Naive thymus-derived CD4-positive, alpha-beta T cell (primary cell): ENCODE measurements at regions of chr6 and their contacts with region 1.

Region 1: DNA sequence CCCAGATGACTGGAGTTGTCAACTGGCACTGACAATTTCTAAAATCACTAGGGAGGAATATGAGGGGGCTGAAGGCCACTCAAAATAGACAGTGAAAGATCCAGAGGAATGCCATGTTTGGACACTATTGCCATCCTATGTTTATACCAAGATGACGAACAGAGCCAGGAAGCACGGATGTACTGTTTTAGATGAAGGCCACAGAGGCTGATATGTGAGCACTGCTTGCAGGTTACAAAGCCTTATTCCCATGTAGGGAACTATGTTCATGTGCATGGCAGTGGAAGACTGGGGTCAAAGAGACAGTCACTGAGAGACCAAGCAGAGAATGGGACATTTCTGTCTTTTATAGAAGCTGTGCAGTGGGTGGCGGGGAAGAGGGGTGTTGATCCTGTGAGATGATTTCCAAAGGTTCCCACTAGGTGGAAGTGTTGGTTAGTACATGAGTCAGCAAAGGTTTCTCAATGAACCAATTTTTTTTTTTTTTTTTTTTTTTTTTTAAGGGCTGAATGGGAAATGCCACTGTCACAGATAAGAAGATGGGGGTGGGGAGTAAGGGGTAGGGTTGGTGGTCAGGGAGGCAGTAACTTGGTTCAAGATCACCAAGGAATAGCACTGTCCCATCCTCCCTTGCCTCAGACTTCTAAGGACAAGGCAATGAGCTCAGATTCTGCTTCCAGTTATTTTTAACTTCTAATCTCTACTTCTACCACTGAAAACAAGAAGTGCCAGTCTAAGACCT is 46.7 kb upstream of the MOCS1 start:
- DNase-seq: peak in 3 of 9 donors; percentile 2 to 23 (median 5)
- ATAC-seq: no peak
- H3K4me3 ChIP-seq: no peak overlapping the region
- H3K4me3 Mint-ChIP-seq: no peak overlapping the region
- H3K27ac ChIP-seq: no peak overlapping the region
- H3K27ac Mint-ChIP-seq: no peak overlapping the region
- H3K4me1 ChIP-seq: no peaks in the 10 kb centered on the region
- H3K4me1 Mint-ChIP-seq: no peaks in the 10 kb centered on the region
- H3K27me3 ChIP-seq: no peaks in the 10 kb centered on the region
- H3K27me3 Mint-ChIP-seq: peaks cover 14 to 32% (median 25%) of the 10 kb centered on the region in 5 donors

Region 2: GRCh38 chr6:40308533-40309306 is 327.7 kb after region 1 on chr6:
- CTCF ChIA-PET with region 1: no interaction called
- POLR2A ChIA-PET with region 1: no interaction called
- intact Hi-C with region 1: loop called (anchors 5 to 10 kb)
- DNase-seq: peak in 6 of 9 donors; percentile 14 to 70 (median 40)
- ATAC-seq: peak; percentile 58
- H3K4me3 ChIP-seq: no peak overlapping the region
- H3K4me3 Mint-ChIP-seq: no peak overlapping the region
- H3K27ac ChIP-seq: no peak overlapping the region
- H3K27ac Mint-ChIP-seq: peak overlapping the region in 1 of 9 donors; percentile 58
- H3K4me1 ChIP-seq: no peaks in the 10 kb centered on the region
- H3K4me1 Mint-ChIP-seq: peaks cover 0 to 12% (median 0%) of the 10 kb centered on the region in 7 donors
- H3K27me3 ChIP-seq: no peaks in the 10 kb centered on the region
- H3K27me3 Mint-ChIP-seq: peaks cover 34 to 48% (median 44%) of the 10 kb centered on the region in 5 donors

Region 3: GRCh38 chr6:40587240-40588069 is 606.4 kb after region 1 on chr6 and contains the start of gene LRFN2:
- CTCF ChIA-PET with region 1: no interaction called
- POLR2A ChIA-PET with region 1: no interaction called
- intact Hi-C with region 1: loop called in 1 of 2 experiments (anchors 5 kb)
- DNase-seq: peak; percentile 28 to 83 (median 64)
- ATAC-seq: peak; percentile 89
- H3K4me3 ChIP-seq: peak within 1 kb of the TSS; percentile 61
- H3K4me3 Mint-ChIP-seq: peak within 1 kb of the TSS; percentile 72 to 90 (median 84)
- H3K27ac ChIP-seq: peak within 1 kb of the TSS; percentile 32
- H3K27ac Mint-ChIP-seq: peak within 1 kb of the TSS in 3 of 9 donors; percentile 28 to 66 (median 50)
- H3K4me1 ChIP-seq: peaks cover 0 to 10% of the 10 kb centered on the region in 2 donors
- H3K4me1 Mint-ChIP-seq: peaks cover 0 to 36% (median 11%) of the 10 kb centered on the region in 7 donors
- H3K27me3 ChIP-seq: no peaks in the 10 kb centered on the region
- H3K27me3 Mint-ChIP-seq: peaks cover 17 to 54% (median 30%) of the 10 kb centered on the region in 5 donors
- total RNA-seq, gene LRFN2: 0.19 to 4.6 (median 0.96) TPM in 3 of 5 experiments, not detected in the others

Region 4: DNA sequence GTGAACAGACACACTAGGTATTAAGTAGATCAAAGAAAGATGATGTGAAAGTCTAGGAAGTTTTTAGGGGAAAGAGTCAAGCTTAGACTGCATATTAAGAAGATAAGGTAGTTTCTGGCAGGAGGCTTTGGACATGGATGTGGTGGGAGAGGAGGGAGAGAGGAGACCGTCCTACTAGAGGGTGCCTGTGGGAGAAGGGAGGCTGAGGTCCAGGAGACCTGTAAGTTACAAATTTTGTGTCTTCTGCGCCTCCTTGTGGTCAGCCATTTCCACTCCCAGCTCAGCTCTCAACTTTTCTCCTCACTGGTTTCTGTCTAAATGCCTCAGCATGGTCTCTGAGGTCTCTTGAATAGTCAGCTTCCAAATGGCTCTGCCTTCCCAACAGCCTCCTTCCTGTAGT is 864.5 kb after region 1 on chr6:
- CTCF ChIA-PET with region 1: no interaction called
- POLR2A ChIA-PET with region 1: no interaction called
- intact Hi-C with region 1: loop called (anchors 10 kb)
- DNase-seq: peak in 4 of 9 donors; percentile 6 to 23 (median 16)
- ATAC-seq: no peak
- H3K4me3 ChIP-seq: no peak overlapping the region
- H3K4me3 Mint-ChIP-seq: no peak overlapping the region
- H3K27ac ChIP-seq: no peak overlapping the region
- H3K27ac Mint-ChIP-seq: no peak overlapping the region
- H3K4me1 ChIP-seq: no peaks in the 10 kb centered on the region
- H3K4me1 Mint-ChIP-seq: peaks cover 0 to 4% (median 0%) of the 10 kb centered on the region in 7 donors
- H3K27me3 ChIP-seq: no peaks in the 10 kb centered on the region
- H3K27me3 Mint-ChIP-seq: peaks cover 11 to 45% (median 28%) of the 10 kb centered on the region in 5 donors

Region 5: DNA sequence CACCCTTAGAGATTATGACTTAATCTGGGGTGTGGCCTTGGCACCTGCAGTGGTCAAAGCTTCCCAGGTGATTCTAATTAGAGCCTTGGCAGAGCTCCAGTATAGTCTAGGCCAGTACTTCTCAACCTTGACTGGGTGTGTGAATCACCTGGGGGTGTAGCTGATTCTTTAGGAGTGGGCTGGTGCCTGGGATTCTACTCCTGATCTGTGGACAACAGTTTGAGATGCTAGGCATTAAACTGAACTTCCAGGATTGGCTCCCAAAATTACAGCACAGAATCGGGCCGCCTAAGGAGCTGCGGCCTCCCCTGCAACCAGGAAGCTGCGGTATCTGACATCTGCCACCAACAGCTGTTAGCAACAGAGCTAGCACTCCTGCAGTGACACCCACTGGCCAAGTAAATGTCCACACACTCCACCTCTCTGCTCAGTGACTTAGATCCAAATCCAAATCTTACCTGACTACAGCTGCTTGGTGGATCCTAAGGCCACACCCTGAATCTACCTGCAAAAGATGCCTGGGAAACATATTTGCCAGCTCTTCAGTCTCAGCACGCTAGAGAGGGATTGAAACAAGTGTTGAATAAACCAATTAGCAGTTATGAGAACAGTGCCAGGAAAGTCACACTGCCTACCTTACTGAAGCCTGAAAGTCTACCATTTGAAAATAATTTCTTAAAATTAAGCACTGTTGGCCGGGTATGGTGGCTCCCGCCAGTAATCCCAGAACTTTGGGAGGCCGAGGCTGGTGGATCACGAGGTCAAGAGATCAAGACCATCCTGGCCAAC is 931.3 kb after region 1 on chr6:
- CTCF ChIA-PET with region 1: no interaction called
- POLR2A ChIA-PET with region 1: no interaction called
- intact Hi-C with region 1: loop called in 1 of 2 experiments (anchors 5 kb)
- DNase-seq: peak in 5 of 9 donors; percentile 9 to 26 (median 12)
- ATAC-seq: peak; percentile 49
- H3K4me3 ChIP-seq: no peak overlapping the region
- H3K4me3 Mint-ChIP-seq: no peak overlapping the region
- H3K27ac ChIP-seq: no peak overlapping the region
- H3K27ac Mint-ChIP-seq: no peak overlapping the region
- H3K4me1 ChIP-seq: no peaks in the 10 kb centered on the region
- H3K4me1 Mint-ChIP-seq: peaks cover 0 to 5% (median 0%) of the 10 kb centered on the region in 7 donors
- H3K27me3 ChIP-seq: no peaks in the 10 kb centered on the region
- H3K27me3 Mint-ChIP-seq: peaks cover 8 to 42% (median 15%) of the 10 kb centered on the region in 5 donors